T-cell (primary cell): ENCODE measurements at regions of chr10 and their contacts with region 1.

Region 1: DNA sequence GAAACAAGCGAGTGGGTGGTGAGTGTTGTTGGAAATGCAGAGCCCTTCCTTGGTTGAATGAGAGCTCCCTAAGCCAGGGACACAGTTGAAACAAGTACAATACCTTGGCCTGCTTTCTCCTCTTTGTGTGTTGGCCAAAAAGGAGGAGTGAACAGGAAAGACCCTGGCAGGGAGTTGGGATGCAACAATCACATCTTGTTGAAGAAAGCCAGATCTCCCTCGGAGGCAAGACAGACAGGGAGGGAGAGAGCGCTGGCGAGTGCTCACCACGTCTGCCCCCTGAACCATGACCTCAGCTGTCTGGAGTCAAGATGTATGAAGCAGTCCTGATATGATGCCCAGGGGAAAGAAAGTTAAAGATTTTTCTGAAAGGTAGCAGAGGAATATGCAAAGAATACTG is 66.8 kb downstream of the ADAM12 start:
- DNase-seq: no peak
- ATAC-seq: no peak
- H3K4me3 ChIP-seq: no peak overlapping the region
- H3K4me3 Mint-ChIP-seq: no peak overlapping the region
- H3K27ac ChIP-seq: no peak overlapping the region
- H3K27ac Mint-ChIP-seq: no peak overlapping the region
- H3K4me1 ChIP-seq: no peaks in the 10 kb centered on the region
- H3K4me1 Mint-ChIP-seq: no peaks in the 10 kb centered on the region
- H3K27me3 ChIP-seq: no peaks in the 10 kb centered on the region
- H3K27me3 Mint-ChIP-seq: peaks cover 0 to 13% of the 10 kb centered on the region in 2 donors

Region 2: GRCh38 chr10:126278846-126279245 is 42.6 kb before region 1 on chr10:
- CTCF ChIA-PET with region 1: no interaction called
- POLR2A ChIA-PET with region 1: interaction called in 1 of 2 experiments, 14 read pairs
- DNase-seq: no peak
- ATAC-seq: no peak
- H3K4me3 ChIP-seq: no peak overlapping the region
- H3K4me3 Mint-ChIP-seq: no peak overlapping the region
- H3K27ac ChIP-seq: no peak overlapping the region
- H3K27ac Mint-ChIP-seq: no peak overlapping the region
- H3K4me1 ChIP-seq: no peaks in the 10 kb centered on the region
- H3K4me1 Mint-ChIP-seq: no peaks in the 10 kb centered on the region
- H3K27me3 ChIP-seq: no peaks in the 10 kb centered on the region
- H3K27me3 Mint-ChIP-seq: peaks cover 0 to 5% of the 10 kb centered on the region in 2 donors

Region 3: GRCh38 chr10:126336801-126337200 is 15.4 kb after region 1 on chr10:
- CTCF ChIA-PET with region 1: no interaction called
- POLR2A ChIA-PET with region 1: no interaction called
- DNase-seq: no peak
- ATAC-seq: no peak
- H3K4me3 ChIP-seq: no peak overlapping the region
- H3K4me3 Mint-ChIP-seq: no peak overlapping the region
- H3K27ac ChIP-seq: no peak overlapping the region
- H3K27ac Mint-ChIP-seq: no peak overlapping the region
- H3K4me1 ChIP-seq: no peaks in the 10 kb centered on the region
- H3K4me1 Mint-ChIP-seq: no peaks in the 10 kb centered on the region
- H3K27me3 ChIP-seq: no peaks in the 10 kb centered on the region
- H3K27me3 Mint-ChIP-seq: no peaks in the 10 kb centered on the region